ENCODE measurements at regions of chr3 and their contacts with region 1.

Region 1: GRCh38 chr3:136196401-136197158 is 445 bp upstream of the MSL2 start:
- DNase-seq: peak; percentile 100
- H3K4me3 Mint-ChIP-seq: peak overlapping the region; percentile 100
- H3K27ac Mint-ChIP-seq: peak overlapping the region; percentile 94
- H3K4me1 Mint-ChIP-seq: peaks cover 17% of the 10 kb centered on the region
- H3K27me3 Mint-ChIP-seq: peaks cover 2% of the 10 kb centered on the region

Region 2: DNA sequence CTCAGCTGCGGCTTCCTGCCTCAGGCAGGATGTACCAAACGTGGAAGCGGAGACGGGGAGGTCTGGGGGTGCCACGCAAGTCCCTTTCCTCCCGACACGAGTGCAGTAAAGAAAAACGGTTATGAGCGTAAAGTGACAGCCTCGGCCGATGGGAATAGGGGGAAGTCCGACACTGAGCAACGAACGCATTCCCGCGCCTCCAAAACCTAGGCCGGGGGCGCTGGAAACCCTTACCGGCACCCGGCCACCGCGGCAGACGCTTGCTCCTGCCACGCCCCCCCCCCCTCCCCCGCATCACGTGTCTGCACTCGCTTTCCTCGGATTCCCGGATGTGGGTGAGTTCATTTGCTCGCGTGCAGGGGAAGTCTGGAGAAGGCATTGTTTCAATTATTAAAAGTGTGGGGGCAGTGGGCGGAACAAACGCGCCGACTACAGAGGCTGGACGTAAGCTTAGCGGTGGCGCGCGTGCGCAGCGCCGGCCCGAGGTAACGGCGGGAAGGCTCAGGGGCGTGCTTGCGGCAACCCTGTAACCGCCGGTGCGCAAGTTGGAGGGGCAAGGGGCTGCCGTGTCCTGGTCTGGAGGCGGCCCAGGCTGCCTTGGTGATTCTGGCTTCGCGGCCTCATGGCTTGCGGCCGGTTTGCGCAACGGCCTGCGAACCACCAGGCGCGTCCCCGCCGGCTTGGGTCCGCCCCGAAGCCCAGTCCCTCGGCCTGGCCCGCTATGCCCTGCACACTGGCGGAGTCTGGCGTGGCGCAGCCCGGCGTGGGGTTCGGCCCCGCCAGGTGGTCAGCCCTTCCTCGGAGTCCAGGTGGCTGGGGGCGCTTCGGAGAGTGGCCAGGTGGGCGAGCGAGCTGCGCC is 1710.6 kb before region 1 on chr3 and contains the starts of genes ANAPC13 and CEP63:
- CTCF ChIA-PET with region 1: no interaction called
- intact Hi-C with region 1: loop called (anchors 2 kb)
- DNase-seq: peak; percentile 97
- H3K4me3 Mint-ChIP-seq: peak within 1 kb of the TSS; percentile 87
- H3K27ac Mint-ChIP-seq: peak within 1 kb of the TSS; percentile 98
- H3K4me1 Mint-ChIP-seq: peaks cover 45% of the 10 kb centered on the region
- H3K27me3 Mint-ChIP-seq: no peaks in the 10 kb centered on the region
- total RNA-seq, gene ANAPC13: 42.6 to 44.7 TPM
- total RNA-seq, gene CEP63: 26.9 to 27.0 TPM

Region 3: GRCh38 chr3:136171097-136171542 is 25.5 kb before region 1 on chr3:
- CTCF ChIA-PET with region 1: interaction called, 4 read pairs
- intact Hi-C with region 1: loop called (anchors 1 kb)
- DNase-seq: peak; percentile 46
- H3K4me3 Mint-ChIP-seq: peak overlapping the region; percentile 2
- H3K27ac Mint-ChIP-seq: peak overlapping the region; percentile 70
- H3K4me1 Mint-ChIP-seq: peaks cover 43% of the 10 kb centered on the region
- H3K27me3 Mint-ChIP-seq: no peaks in the 10 kb centered on the region

Region 4: GRCh38 chr3:136267235-136267634 is 70.7 kb after region 1 on chr3:
- CTCF ChIA-PET with region 1: no interaction called
- intact Hi-C with region 1: no loop called
- DNase-seq: no peak
- H3K4me3 Mint-ChIP-seq: no peak overlapping the region
- H3K27ac Mint-ChIP-seq: no peak overlapping the region
- H3K4me1 Mint-ChIP-seq: peaks cover 25% of the 10 kb centered on the region
- H3K27me3 Mint-ChIP-seq: no peaks in the 10 kb centered on the region

Region 5: GRCh38 chr3:136353461-136353860 is 156.9 kb after region 1 on chr3:
- CTCF ChIA-PET with region 1: no interaction called
- intact Hi-C with region 1: loop called (anchors 1 kb)
- DNase-seq: peak; percentile 61
- H3K4me3 Mint-ChIP-seq: no peak overlapping the region
- H3K27ac Mint-ChIP-seq: peak overlapping the region; percentile 82
- H3K4me1 Mint-ChIP-seq: peaks cover 12% of the 10 kb centered on the region
- H3K27me3 Mint-ChIP-seq: no peaks in the 10 kb centered on the region

Region 6: GRCh38 chr3:136752422-136753325 is 556.1 kb after region 1 on chr3:
- CTCF ChIA-PET with region 1: interaction called, 13 read pairs
- intact Hi-C with region 1: loop called (anchors 1 kb)
- DNase-seq: peak; percentile 99
- H3K4me3 Mint-ChIP-seq: peak overlapping the region; percentile 86
- H3K27ac Mint-ChIP-seq: peak overlapping the region; percentile 97
- H3K4me1 Mint-ChIP-seq: peaks cover 29% of the 10 kb centered on the region
- H3K27me3 Mint-ChIP-seq: no peaks in the 10 kb centered on the region

Region 7: DNA sequence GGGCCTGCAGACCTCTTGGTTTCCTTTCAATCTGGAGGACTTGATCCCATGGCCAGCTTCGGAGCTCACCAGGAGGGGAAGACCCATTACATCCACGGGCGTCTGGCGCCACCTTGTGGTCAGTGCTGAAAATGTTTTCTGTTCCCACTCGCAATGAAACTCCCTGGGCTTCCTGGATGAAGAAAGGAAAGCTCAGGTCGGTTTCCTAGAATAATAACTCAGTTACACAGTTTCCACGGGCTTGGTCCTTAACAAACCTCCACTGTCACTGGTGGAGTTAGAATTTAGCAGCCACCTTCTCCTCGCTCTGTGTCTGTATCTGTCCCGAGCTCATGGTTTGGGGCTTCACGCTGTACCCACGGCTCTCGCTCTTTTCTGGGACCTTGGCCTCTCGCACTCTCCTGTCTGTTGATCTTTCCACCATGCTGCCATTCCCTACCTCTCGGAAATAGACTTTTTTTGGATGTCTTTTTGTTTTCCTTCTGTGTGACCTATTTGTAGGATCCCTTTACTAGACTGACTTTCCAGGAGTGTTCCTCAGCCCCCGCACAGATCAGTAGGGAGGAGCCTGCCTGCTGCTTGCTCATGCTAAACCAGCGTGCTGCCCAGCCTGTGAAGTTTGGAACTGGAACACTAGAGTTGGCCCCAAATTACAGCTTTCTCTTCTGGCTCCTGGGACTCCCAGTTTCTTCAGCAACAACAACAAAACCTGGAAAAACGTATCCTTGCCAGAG is 817.5 kb after region 1 on chr3:
- CTCF ChIA-PET with region 1: no interaction called
- intact Hi-C with region 1: loop called (anchors 5 kb)
- DNase-seq: peak; percentile 89
- H3K4me3 Mint-ChIP-seq: peak overlapping the region; percentile 70
- H3K27ac Mint-ChIP-seq: no peak overlapping the region
- H3K4me1 Mint-ChIP-seq: peaks cover 6% of the 10 kb centered on the region
- H3K27me3 Mint-ChIP-seq: no peaks in the 10 kb centered on the region